BJ (cell line): ENCODE measurements at regions of chr14 and their contacts with region 1.

Region 1: DNA sequence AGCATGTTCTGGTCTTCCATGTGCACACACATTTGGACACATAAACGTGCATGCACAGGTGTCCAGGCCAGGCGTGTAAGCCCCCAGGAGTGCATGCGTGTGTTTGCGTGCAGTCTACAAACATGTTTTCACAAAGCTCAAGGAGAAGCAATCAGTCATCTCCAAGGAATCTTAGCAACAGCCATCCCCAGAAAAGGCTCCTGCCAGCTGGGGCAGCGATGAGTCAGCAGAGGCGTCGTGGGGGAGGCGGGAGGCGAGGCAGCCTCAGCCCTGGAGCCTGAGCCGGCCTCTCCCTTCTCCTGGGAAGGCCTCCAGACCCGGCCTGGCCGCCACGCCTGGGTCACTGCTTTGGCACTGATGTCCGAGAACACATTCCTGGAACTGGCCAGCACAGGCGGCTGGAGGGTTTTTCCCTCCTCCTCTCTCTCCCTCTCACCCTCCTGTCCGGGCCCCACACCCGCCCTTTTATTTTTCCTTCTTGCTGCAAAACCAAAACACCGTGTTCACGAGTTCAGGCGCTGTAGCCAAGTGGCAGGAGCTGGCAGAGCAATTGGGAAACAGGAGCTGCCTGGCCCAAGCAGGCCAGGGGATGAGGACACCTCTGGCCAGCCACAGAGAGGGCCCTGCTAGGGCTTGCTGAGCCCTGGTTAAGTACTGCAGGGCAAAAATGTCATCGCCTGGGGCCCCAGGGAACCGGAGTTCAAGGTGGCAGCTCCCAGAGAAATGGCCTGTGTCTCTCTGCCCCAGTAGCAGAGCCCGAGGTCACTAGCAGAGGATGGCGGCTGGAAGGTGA is 92.7 kb downstream of the LRRC74A start:
- DNase-seq: peak; percentile 96
- H3K4me3 ChIP-seq: no peak overlapping the region
- H3K27me3 ChIP-seq: no peaks in the 10 kb centered on the region
- CTCF ChIP-seq: no peak

Region 2: DNA sequence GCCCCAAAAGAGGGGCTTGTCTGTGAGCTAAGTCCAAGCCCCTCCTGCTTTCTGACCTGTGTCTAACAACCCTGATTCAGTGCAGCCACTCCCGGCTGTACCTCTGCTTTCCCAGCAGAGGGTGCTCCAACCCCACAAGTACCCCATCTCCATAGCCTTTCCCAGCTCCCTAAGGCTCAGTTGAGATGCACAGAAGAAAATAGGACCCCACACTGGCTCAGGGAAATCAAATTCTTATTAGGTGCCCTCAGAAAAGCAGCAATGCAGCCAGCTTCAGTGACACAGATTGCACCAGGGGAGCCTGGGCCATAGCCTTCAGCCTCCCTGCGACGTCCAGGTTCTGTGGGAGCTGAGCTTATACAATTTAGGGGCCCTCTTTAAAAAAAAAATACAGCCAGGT is 42.9 kb before region 1 on chr14:
- CTCF ChIA-PET with region 1: interaction called, 70 read pairs
- POLR2A ChIA-PET with region 1: no interaction called
- DNase-seq: no peak
- H3K4me3 ChIP-seq: no peak overlapping the region
- H3K27me3 ChIP-seq: peaks cover 1% of the 10 kb centered on the region; the same call in 1 of the 2 replicates
- CTCF ChIP-seq: peak; percentile 93

Region 3: DNA sequence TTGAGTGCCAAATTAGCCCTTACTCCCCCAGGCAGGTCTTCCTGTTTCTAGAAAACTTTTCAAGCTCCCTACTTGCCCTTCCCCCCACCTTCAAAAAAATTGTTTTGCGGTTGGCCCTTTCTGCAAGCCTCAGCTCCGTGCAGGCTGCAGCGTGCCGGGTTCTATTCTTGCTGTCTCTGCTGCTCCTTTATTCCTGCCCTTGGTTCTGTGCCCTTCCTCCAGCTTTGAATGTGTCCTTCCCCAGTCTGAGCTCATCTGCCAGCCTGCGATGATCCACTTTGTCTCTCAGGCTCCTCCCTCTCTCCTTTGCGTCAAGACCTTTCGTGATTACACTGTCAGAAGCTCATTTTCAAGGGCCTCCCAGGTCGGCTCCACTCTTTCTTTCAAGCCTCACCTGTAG is 11.0 kb after region 1 on chr14:
- CTCF ChIA-PET with region 1: interaction called, 13 read pairs
- POLR2A ChIA-PET with region 1: no interaction called
- DNase-seq: no peak
- H3K4me3 ChIP-seq: no peak overlapping the region
- H3K27me3 ChIP-seq: no peaks in the 10 kb centered on the region
- CTCF ChIP-seq: no peak

Region 4: DNA sequence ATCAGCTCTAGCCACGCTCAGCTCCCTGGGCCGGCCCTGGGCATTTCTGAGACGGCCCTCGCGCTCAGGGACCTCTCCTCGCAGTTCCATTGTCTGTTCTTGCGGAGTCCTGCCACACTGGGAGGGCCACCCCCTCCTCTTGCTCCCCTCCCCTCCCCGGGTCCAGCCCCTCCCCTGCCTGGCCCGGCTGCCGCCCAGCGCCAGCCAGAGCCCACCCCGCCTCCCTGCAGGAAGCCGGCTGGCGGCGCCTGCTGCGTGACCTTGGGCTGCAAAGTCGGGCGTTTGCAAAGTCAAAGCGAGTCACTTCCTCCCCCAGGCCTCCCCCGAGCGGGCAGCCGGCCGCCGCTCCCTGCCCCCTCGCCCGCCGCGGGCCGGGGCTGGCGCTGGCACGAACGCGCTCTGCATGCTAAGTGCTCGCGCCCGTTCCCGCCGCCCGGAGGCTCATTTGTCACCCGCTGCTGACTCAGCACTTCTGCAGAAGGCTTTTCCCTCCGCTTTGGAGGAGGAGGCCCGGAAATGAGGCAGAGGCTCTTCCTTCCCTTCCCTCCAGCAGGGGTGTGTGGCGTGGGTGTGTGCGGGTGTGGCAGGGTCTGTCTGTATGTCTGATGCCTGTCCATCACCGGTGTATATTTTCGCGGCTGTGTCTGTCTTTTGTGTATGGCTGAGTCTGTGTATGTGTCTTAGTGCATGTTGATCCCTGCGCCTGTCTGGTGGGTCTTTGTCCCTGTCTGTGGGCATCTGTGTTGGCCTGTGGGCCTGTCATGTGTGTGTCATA is 37.6 kb after region 1 on chr14:
- CTCF ChIA-PET with region 1: interaction called, 31 read pairs
- POLR2A ChIA-PET with region 1: interaction called, 3 read pairs
- DNase-seq: peak; percentile 78
- H3K4me3 ChIP-seq: peak overlapping the region; percentile 15
- H3K27me3 ChIP-seq: no peaks in the 10 kb centered on the region
- CTCF ChIP-seq: 0 out of 2 replicates have a peak, but pooled peaks have one; percentile 2

Region 5: DNA sequence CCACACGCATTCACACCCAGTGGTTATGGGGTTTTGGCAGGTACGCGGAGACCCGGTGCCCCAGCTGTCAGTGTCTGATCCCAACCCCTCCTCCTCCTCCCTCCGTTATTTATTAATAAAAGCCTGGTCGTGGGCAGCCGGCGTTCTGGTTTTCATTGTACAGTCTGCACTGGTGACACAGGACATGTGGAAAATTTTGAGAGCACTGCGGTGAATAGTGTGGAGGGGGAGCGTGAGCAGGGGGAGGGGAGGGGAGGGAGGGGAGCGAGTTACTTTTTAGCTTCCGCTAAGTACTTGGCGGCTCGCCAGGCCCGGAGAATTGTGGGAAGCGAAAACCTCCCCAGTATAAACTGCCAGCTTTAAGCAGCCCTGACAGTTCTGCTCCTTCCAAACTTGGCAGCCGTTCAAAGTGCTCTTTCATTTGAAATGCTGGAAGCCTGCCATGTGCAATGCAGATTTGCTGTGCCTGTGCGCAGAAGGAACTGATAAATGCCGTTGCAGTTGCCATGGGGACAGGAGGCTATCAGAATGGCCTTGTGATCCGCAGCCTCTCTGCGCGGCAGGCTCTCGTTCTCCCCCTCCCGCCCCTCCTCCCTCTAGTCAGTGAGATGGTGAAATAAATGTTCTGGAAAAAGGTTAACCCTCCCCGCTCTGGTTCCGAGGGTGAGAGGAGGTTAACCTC is 121.3 kb after region 1 on chr14:
- CTCF ChIA-PET with region 1: interaction called, 316 read pairs
- POLR2A ChIA-PET with region 1: interaction called, 20 read pairs
- DNase-seq: peak; percentile 94
- H3K4me3 ChIP-seq: peak overlapping the region; percentile 22
- H3K27me3 ChIP-seq: no peaks in the 10 kb centered on the region
- CTCF ChIP-seq: no peak

Region 6: GRCh38 chr14:77067632-77068514 is 148.9 kb after region 1 on chr14:
- CTCF ChIA-PET with region 1: interaction called, 278 read pairs
- POLR2A ChIA-PET with region 1: no interaction called
- DNase-seq: no peak
- H3K4me3 ChIP-seq: no peak overlapping the region
- H3K27me3 ChIP-seq: no peaks in the 10 kb centered on the region
- CTCF ChIP-seq: peak; percentile 94